Sigmoid colon (tissue), 7 donors: ENCODE measurements at regions of chr6 and their contacts with region 1.

Region 1: DNA sequence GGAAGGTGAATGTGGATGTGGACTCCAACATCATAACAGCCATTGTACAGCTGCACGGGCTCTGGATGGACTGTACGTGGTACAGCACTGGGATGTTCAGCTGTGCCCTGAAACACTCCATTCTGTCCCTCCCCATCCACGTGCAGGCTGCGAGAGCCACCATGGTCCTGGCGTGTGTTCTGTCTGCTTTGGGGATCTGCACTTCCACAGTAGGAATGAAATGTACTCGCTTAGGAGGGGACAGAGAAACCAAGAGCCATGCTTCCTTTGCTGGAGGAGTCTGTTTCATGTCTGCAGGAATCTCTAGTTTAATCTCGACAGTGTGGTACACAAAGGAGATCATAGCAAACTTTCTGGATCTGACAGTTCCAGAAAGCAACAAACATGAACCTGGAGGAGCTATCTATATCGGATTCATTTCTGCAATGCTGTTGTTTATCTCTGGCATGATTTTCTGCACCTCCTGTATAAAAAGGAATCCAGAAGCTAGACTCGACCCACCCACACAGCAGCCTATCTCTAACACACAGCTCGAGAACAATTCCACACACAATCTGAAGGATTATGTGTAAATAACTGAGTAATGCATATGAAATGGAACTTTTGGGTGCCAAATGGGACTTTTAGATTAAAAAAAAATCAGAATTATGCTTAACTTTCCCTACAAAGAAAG is 12.1 kb downstream of the CLDN20 start:
- DNase-seq: no peak
- H3K4me3 ChIP-seq: no peak overlapping the region
- H3K27ac ChIP-seq: peak overlapping the region; percentile 47 to 81 (median 66)
- H3K4me1 ChIP-seq: peaks cover 0 to 60% (median 51%) of the 10 kb centered on the region in 4 donors
- H3K27me3 ChIP-seq: no peaks in the 10 kb centered on the region
- CTCF ChIP-seq: no peak
- EP300 ChIP-seq: no peak
- POLR2A ChIP-seq: no peak

Region 2: DNA sequence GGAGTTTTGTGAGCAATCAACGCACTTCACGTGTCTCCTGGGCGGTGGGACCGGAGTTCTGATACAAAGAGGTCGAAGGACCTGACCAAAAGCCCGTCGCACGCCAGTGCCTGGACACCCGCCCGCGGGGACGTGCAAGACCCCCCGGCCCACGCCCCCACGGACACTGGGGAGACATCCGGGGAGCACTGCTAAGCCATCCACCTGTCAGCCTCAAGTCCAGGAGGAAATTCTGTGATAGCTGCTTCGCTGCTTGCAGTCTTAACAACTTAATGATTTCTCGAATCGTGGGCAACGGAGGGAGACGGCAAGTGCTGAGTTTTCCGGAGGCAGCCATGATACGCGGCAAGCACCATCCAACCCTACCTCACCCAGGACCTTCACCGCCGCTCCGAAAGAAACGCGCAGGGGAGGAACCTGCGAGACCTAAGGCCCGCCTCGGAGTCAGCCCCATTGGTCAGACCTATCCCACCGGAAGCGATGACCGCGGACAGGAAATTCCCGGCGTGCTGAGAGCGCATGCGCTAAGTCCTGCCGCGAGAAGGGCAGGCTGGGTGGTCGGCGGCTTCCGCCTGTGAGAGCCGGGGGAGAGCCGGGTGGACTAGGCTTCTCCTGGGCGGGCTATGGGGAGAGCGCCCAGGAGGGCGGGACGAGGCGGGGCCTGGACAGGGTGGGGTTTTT is 38.3 kb after region 1 on chr6 and contains the start of gene TFB1M:
- intact Hi-C with region 1: loop called (anchors 5 kb)
- DNase-seq: peak; percentile 99
- H3K4me3 ChIP-seq: peak within 1 kb of the TSS; percentile 59 to 83 (median 76)
- H3K27ac ChIP-seq: peak within 1 kb of the TSS; percentile 83 to 91 (median 88)
- H3K4me1 ChIP-seq: peaks cover 0 to 20% (median 4%) of the 10 kb centered on the region in 4 donors
- H3K27me3 ChIP-seq: no peaks in the 10 kb centered on the region
- CTCF ChIP-seq: no peak
- EP300 ChIP-seq: peak in 2 of 4 donors; percentile 9 to 17
- POLR2A ChIP-seq: peak; percentile 56 to 73
- total RNA-seq, gene TFB1M: 10.7 to 22.2 (median 16.8) TPM